ENCODE measurements at regions of chr1 and their contacts with region 1.

Region 1: DNA sequence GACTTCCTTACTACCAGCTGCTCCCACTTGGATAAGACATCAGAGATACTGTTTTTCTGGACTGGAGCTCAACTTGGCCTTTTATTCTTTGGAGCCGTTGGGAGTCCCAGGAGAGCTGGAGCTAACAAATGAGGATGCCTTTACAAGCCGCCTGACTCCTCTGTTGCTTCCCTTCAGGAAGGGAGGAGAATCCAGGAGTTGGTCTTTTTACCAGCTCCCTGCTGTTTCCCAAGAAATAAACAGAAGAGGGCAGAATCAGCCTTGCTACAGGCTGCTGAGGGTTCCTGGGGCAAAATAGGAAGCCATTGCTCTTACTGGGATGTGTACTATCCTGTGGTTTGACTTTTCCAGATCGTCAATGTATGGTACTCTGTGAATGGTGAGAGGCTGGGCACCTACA is 1.5 kb downstream of the EIF3I start:
- DNase-seq: no peak
- ATAC-seq: no peak
- H3K4me3 ChIP-seq: no peak overlapping the region
- H3K4me3 Mint-ChIP-seq: peak overlapping the region; percentile 90 to 96 (median 94)
- H3K27ac ChIP-seq: no peak overlapping the region
- H3K27ac Mint-ChIP-seq: peak overlapping the region; percentile 66 to 97
- H3K4me1 ChIP-seq: peaks cover 21 to 33% of the 10 kb centered on the region in 2 experiments
- H3K4me1 Mint-ChIP-seq: peaks cover 24 to 56% (median 50%) of the 10 kb centered on the region in 3 donors
- H3K27me3 ChIP-seq: no peaks in the 10 kb centered on the region
- H3K27me3 Mint-ChIP-seq: no peaks in the 10 kb centered on the region

Region 2: GRCh38 chr1:32255072-32256071 is 31.7 kb after region 1 on chr1:
- CTCF ChIA-PET with region 1: interaction called in 1 of 2 experiments, 4 read pairs
- POLR2A ChIA-PET with region 1: interaction called in 1 of 2 experiments, 11 read pairs
- DNase-seq: peak in 5 of 35 experiments; percentile 33 to 54 (median 43)
- ATAC-seq: peak in 1 of 4 experiments; percentile 32
- H3K4me3 ChIP-seq: peak overlapping the region; percentile 84 to 97
- H3K4me3 Mint-ChIP-seq: peak overlapping the region; percentile 83 to 100 (median 91)
- H3K27ac ChIP-seq: peak overlapping the region; percentile 96
- H3K27ac Mint-ChIP-seq: peak overlapping the region; percentile 93
- H3K4me1 ChIP-seq: peaks cover 42 to 71% of the 10 kb centered on the region in 2 experiments
- H3K4me1 Mint-ChIP-seq: peaks cover 50 to 68% (median 68%) of the 10 kb centered on the region in 3 donors
- H3K27me3 ChIP-seq: no peaks in the 10 kb centered on the region
- H3K27me3 Mint-ChIP-seq: no peaks in the 10 kb centered on the region

Measured in T-cell (primary cell).